ENCODE measurements at regions of chr21 and their contacts with region 1.

Region 1: DNA sequence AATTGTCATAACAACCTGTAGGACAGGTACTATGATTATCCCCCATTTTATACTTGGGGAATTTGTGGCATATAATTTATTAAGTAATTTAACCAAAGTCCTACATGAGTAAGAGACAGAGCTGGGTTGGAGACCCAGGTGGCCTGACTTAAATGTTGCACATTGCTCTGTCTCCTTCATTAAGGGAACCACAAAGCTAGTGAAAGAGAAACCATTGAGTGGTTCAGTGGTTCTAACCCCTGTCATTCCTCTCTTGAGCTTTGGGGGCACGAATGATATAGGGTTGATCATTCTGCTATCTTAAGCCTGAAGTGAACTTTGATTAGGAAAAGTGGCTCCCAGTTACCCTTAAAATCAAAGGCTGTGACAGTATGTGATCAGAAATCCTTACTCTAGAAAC is 5.3 kb upstream of the MAP3K7CL start:
- DNase-seq: no peak
- ATAC-seq: no peak
- H3K4me3 ChIP-seq: no peak overlapping the region
- H3K27ac ChIP-seq: no peak overlapping the region
- H3K4me1 ChIP-seq: no peaks in the 10 kb centered on the region
- H3K27me3 ChIP-seq: no peaks in the 10 kb centered on the region
- CTCF ChIP-seq: no peak

Region 2: DNA sequence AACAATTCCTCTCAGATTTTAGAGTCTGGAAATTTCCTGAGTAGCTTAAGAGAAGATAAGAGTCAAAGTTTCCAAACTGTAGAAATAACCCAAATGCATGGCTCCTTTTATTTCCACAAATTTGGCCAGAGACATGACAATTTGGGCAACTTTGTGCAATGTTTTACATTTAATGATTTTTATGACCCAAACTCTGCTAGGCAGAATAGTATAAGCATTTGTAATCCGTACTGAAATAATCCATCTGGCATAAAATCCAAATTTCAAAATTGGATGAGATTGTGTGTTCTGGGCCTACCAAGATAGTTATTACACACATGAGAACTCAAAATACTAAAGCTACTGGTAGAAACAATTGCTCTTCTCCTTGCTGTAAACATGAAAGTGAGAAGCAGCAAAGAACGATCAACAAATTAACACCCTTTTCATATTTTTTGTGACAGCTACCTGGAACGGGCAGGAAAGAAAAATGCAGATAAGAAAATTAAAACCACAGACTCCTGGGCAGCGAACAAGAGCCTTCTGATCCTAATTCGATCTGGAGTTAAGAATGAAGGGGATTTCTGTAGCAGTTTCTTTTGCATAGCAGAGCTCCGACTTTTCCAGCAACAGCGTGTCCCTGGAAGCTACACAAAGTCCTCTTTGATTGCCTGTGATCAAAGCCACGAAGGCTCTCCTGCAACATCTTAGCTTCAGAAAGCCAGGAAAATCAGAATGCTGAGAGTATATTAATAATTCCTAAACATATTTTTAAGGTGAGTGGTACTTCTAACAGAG is 623.4 kb after region 1 on chr21:
- intact Hi-C with region 1: loop called (anchors 10 kb)
- DNase-seq: no peak
- ATAC-seq: no peak
- H3K4me3 ChIP-seq: no peak overlapping the region
- H3K27ac ChIP-seq: no peak overlapping the region
- H3K4me1 ChIP-seq: no peaks in the 10 kb centered on the region
- H3K27me3 ChIP-seq: no peaks in the 10 kb centered on the region
- CTCF ChIP-seq: no peak